Activated CD4-positive, alpha-beta memory T cell treated with anti-CD3 and anti-CD28 coated beads, Interleukin-2, amount 10 ng/mL, durations not matched to agents 7 days and 5 days (primary cell): ENCODE measurements at regions of chr15 and their contacts with region 1.

Region 1: DNA sequence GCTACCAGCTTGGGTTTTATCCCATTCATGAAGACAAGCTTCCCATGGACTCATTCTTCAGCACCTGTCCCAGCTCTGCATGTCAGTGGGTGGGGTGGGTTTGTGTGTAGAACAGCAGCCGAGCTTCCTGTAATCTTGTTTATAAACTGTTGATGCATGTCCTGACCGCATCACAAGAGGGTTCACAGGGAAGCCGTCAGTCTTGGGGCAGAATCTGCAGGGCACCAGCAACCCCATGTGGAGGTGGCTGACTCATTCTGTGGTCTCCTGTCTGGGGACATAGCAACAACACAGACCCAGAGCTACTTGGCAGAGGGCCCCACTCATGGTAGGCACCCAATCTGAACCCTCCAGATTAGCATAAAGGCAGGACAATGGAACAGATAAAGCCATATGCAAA is 35.6 kb downstream of the DAPK2 start:
- DNase-seq: peak; percentile 92
- H3K4me3 Mint-ChIP-seq: peak overlapping the region; percentile 42
- H3K27ac Mint-ChIP-seq: peak overlapping the region; percentile 86
- H3K4me1 Mint-ChIP-seq: peaks cover 58% of the 10 kb centered on the region
- H3K27me3 Mint-ChIP-seq: no peaks in the 10 kb centered on the region

Region 2: GRCh38 chr15:63833021-63833696 is 177.6 kb before region 1 on chr15:
- CTCF ChIA-PET with region 1: no interaction called
- POLR2A ChIA-PET with region 1: interaction called, 13 read pairs
- DNase-seq: peak; percentile 52
- H3K4me3 Mint-ChIP-seq: peak overlapping the region; percentile 89
- H3K27ac Mint-ChIP-seq: peak overlapping the region; percentile 62
- H3K4me1 Mint-ChIP-seq: peaks cover 37% of the 10 kb centered on the region
- H3K27me3 Mint-ChIP-seq: peaks cover 4% of the 10 kb centered on the region

Region 3: GRCh38 chr15:63891079-63891767 is 119.5 kb before region 1 on chr15:
- CTCF ChIA-PET with region 1: interaction called, 13 read pairs
- POLR2A ChIA-PET with region 1: interaction called, 13 read pairs
- DNase-seq: peak; percentile 77
- H3K4me3 Mint-ChIP-seq: no peak overlapping the region
- H3K27ac Mint-ChIP-seq: peak overlapping the region; percentile 28
- H3K4me1 Mint-ChIP-seq: peaks cover 46% of the 10 kb centered on the region
- H3K27me3 Mint-ChIP-seq: no peaks in the 10 kb centered on the region

Region 4: GRCh38 chr15:63977119-63977518 is 33.6 kb before region 1 on chr15:
- CTCF ChIA-PET with region 1: no interaction called
- POLR2A ChIA-PET with region 1: no interaction called
- DNase-seq: no peak
- H3K4me3 Mint-ChIP-seq: no peak overlapping the region
- H3K27ac Mint-ChIP-seq: no peak overlapping the region
- H3K4me1 Mint-ChIP-seq: peaks cover 5% of the 10 kb centered on the region
- H3K27me3 Mint-ChIP-seq: no peaks in the 10 kb centered on the region

Region 5: DNA sequence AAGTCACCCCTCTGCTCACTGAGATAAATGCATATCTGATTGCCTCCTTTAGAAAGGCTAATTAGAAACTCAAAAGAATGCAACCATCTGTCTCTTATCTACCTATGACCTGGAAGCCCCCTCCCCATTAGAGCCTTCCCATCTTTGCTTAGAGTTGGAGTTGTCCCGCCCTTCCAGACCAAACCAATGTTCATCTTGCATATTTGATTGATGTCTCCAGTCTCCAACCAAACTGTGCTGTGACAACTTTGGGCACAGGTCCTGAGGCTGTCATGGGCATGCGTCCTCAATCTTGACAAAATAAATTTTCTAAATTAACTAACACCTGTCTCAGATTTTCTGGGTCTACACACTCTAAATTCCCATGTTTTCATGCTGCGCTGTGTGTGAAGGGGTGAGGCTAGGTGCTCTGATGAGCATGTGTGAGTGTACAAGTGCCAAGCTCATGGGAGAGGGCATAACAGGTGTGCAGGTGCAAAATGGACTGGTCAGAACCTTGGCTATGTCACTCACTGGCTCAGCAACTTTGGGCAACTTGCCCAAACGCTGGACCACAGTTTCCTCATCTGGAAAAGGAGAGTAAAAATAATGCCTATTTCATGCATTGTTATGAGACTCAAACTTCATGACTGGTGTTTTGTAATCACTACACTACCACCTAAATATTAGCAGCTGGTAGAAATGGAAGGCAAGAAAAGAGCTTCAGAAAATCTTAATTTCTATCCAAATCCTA is 28.3 kb after region 1 on chr15:
- CTCF ChIA-PET with region 1: interaction called, 4 read pairs
- POLR2A ChIA-PET with region 1: interaction called, 12 read pairs
- DNase-seq: no peak
- H3K4me3 Mint-ChIP-seq: no peak overlapping the region
- H3K27ac Mint-ChIP-seq: no peak overlapping the region
- H3K4me1 Mint-ChIP-seq: no peaks in the 10 kb centered on the region
- H3K27me3 Mint-ChIP-seq: no peaks in the 10 kb centered on the region